ENCODE measurements at regions of chr1 and their contacts with region 1.

Region 1: GRCh38 chr1:89358287-89358893 is 5.5 kb upstream of the GBP6 start:
- DNase-seq: peak; percentile 95
- H3K4me3 Mint-ChIP-seq: peak overlapping the region; percentile 71
- H3K27ac Mint-ChIP-seq: peak overlapping the region; percentile 63
- H3K4me1 Mint-ChIP-seq: peaks cover 58% of the 10 kb centered on the region
- H3K27me3 Mint-ChIP-seq: peaks cover 7% of the 10 kb centered on the region

Region 2: GRCh38 chr1:88998716-88999115 is 359.7 kb before region 1 on chr1:
- intact Hi-C with region 1: loop called (anchors 1 kb)
- DNase-seq: peak; percentile 85
- H3K4me3 Mint-ChIP-seq: no peak overlapping the region
- H3K27ac Mint-ChIP-seq: no peak overlapping the region
- H3K4me1 Mint-ChIP-seq: peaks cover 30% of the 10 kb centered on the region
- H3K27me3 Mint-ChIP-seq: no peaks in the 10 kb centered on the region

Region 3: DNA sequence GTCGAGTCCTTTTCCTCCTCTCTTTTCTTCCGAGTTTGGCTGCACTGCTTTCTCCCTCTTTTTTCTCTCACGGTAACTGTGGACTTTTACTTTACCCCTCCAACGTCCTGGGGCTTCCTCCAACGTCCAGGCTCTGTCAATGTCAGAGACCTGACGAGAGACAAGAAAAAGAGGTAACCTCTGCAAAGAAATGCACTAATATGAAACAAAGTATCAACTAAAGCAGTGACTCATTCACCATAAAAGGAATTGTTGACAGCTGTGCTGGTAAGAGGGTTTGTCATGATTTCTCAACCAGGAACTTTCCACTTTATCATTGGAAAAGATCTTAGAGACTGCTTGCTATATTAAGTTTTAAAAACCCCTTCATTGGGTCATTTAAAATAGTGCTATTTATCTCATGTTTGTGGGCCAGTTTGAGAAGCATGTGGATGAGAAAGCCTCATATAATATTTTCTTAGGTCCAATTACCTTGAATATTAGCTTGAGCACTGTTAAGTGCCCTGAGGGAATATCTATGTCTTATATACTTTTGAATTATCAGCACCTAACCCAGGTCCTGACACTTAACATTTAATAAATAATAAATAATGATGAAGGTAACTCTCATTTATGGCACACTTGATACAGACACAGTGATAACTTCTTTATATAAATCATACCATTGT is 232.3 kb before region 1 on chr1 and contains the start of gene GBP2:
- intact Hi-C with region 1: loop called (anchors 1 kb)
- DNase-seq: peak; percentile 81
- H3K4me3 Mint-ChIP-seq: peak within 1 kb of the TSS; percentile 93
- H3K27ac Mint-ChIP-seq: peak within 1 kb of the TSS; percentile 98
- H3K4me1 Mint-ChIP-seq: peaks cover 61% of the 10 kb centered on the region
- H3K27me3 Mint-ChIP-seq: no peaks in the 10 kb centered on the region
- total RNA-seq, gene GBP2: 168 and 169 TPM in 2 replicates

Region 4: GRCh38 chr1:89149229-89149628 is 209.2 kb before region 1 on chr1:
- intact Hi-C with region 1: no loop called
- DNase-seq: no peak
- H3K4me3 Mint-ChIP-seq: no peak overlapping the region
- H3K27ac Mint-ChIP-seq: no peak overlapping the region
- H3K4me1 Mint-ChIP-seq: peaks cover 6% of the 10 kb centered on the region
- H3K27me3 Mint-ChIP-seq: peaks cover 4% of the 10 kb centered on the region

Region 5: GRCh38 chr1:89274411-89274857 is 84.0 kb before region 1 on chr1:
- intact Hi-C with region 1: loop called (anchors 1 kb)
- DNase-seq: peak; percentile 85
- H3K4me3 Mint-ChIP-seq: peak overlapping the region; percentile 99
- H3K27ac Mint-ChIP-seq: peak overlapping the region; percentile 96
- H3K4me1 Mint-ChIP-seq: peaks cover 64% of the 10 kb centered on the region
- H3K27me3 Mint-ChIP-seq: no peaks in the 10 kb centered on the region

Region 6: DNA sequence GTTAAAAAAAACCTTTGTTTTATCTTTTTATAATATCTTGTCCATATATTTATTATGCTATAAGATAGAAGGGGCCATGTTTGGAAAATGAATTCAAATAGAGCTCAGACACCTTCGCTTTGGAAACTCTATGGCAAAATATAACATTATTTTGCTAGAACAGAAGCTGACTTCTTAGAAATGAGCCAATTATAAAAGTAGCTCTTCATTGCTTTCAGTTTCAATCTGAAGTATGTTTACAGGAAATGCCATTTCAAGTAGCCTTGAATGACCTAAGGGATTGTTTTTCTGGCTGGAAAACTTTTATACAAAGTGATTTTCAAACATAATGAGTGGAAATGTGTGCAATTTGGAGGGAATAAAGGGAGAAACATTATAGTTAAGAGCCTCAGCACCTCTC is 47.9 kb before region 1 on chr1:
- intact Hi-C with region 1: loop called (anchors 2 kb)
- DNase-seq: peak; percentile 64
- H3K4me3 Mint-ChIP-seq: peak overlapping the region; percentile 70
- H3K27ac Mint-ChIP-seq: peak overlapping the region; percentile 92
- H3K4me1 Mint-ChIP-seq: peaks cover 46% of the 10 kb centered on the region
- H3K27me3 Mint-ChIP-seq: no peaks in the 10 kb centered on the region

Measured in activated CD4-positive, alpha-beta T cell treated with anti-CD3 and anti-CD28 coated beads, Interleukin-2, amount 10 ng/mL, durations not matched to agents 24 days and 14 days (primary cell).